ENCODE measurements at regions of chr20 and their contacts with region 1.

Region 1: DNA sequence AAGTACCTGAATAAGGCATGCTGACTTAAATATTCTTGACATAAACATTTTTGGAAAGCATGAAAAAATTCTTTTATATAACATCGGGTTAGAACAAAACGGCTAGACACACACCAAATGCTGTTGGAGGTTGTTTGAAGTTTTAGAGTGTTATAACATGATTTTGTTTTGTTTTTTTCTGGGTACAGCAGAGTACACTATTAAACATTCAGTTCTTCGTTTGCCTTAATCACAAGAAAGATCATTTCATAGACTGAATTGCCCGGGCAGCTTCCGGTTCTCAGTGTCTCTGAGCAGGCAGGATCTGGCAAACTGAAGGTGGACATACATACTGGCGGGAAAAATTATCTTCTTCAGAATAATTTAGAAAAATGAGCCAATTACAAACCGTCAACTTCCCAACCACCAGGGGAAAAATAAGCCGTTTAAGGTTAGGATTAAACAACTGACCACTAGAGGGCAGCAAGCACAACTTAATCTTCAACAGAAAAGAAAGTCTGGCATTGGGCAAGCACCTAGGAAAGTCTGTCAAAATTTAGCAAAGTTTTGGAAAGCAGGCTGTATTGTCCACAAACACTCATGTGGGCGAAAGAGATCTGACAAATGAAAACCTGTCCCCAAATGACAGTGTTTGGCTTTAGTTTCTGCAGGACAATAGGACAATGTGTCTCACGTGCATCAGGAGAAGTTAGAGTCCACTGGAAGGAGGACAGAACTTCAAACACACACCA is 15.0 kb downstream of the ZNF217 start:
- DNase-seq: no peak
- ATAC-seq: peak; percentile 81
- H3K4me3 ChIP-seq: no peak overlapping the region
- H3K27ac ChIP-seq: no peak overlapping the region
- H3K4me1 ChIP-seq: no peaks in the 10 kb centered on the region
- H3K27me3 ChIP-seq: no peaks in the 10 kb centered on the region

Region 2: DNA sequence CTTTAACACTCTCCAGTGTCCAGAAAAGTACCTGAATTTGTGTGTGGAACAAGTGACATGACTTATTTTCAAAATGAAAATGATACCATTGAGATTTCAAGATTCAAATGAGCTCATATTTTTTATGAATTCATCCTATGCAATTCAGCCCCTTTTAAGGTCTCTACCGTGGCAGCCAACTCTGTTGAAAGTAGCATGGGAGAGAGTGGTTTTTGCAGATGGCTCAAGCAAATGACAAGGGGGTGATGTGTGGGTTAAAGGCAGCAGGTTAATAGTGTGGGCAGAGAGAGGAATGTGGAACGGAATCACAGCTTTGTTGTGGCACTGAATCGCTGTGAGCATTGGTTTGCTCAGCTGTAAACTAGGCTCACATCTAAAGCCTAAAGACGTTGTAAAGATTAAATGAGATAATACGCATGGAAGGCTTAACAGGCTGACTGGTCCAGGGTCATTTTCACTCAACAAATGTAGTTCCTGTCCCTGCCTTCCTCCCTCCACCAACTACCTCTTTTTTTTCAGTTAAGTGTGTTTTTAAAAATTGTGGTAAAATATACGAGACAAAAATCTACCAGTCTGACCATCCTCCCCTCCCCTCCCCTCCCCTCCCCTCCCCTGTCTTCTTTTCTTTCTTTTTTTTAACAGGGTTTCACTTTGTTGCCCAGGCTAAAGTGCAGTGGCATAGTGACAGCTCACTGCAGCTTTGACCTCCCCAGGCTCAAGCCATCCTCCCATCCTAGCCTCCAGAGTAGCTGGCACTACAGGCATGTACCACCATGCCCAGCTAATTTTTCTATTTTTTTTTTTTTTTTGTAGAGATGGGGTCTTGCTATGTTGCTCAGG is 129.7 kb after region 1 on chr20:
- intact Hi-C with region 1: no loop called
- DNase-seq: no peak
- ATAC-seq: no peak
- H3K4me3 ChIP-seq: no peak overlapping the region
- H3K27ac ChIP-seq: no peak overlapping the region
- H3K4me1 ChIP-seq: no peaks in the 10 kb centered on the region
- H3K27me3 ChIP-seq: no peaks in the 10 kb centered on the region

Region 3: GRCh38 chr20:53773792-53774401 is 195.2 kb after region 1 on chr20:
- intact Hi-C with region 1: loop called in 1 of 2 experiments (anchors 10 kb)
- DNase-seq: no peak
- ATAC-seq: peak; percentile 80
- H3K4me3 ChIP-seq: no peak overlapping the region
- H3K27ac ChIP-seq: peak overlapping the region in 1 of 2 donors; percentile 90
- H3K4me1 ChIP-seq: peaks cover 0 to 2% of the 10 kb centered on the region in 2 donors
- H3K27me3 ChIP-seq: no peaks in the 10 kb centered on the region

Region 4: DNA sequence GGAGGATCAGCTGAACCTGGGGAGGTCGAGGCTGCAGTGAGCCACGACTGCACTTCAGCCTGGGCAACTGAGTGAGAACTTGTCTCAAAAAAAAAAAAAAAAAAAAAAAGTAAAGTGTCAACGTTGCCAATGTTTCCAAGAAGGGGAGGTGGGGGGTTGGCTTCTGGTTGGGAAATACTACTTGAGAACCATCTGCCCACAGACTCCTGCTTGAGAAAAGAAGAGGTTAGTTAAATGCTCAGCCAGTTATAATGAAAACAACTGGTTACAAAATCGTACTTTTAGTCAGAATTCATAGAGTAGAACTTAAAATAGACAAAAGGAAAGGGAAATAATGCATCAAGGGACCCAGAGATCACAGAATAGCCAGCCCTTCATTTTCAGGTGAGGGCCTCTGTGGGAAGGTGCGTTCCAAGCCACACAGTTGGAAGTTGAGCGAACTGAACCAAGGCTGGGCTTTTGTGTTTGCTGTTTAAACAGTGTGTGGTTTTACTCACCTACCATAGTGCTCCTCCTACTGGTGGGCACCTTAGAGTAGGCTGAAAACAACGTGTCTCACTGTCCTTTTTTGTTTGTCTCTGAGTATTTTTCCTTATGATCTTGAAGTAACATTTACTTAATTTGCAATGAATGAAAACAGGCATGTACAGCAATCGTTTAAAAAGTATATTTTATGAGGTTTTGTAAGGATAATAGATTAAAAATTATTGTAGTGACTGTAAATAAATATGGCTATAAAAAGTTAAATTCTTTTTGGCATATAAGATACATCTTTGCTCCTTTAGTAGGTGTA is 291.0 kb after region 1 on chr20:
- intact Hi-C with region 1: loop called (anchors 2 to 5 kb)
- DNase-seq: peak in 1 of 2 donors; percentile 58
- ATAC-seq: peak; percentile 88
- H3K4me3 ChIP-seq: no peak overlapping the region
- H3K27ac ChIP-seq: no peak overlapping the region
- H3K4me1 ChIP-seq: no peaks in the 10 kb centered on the region
- H3K27me3 ChIP-seq: no peaks in the 10 kb centered on the region

Region 5: DNA sequence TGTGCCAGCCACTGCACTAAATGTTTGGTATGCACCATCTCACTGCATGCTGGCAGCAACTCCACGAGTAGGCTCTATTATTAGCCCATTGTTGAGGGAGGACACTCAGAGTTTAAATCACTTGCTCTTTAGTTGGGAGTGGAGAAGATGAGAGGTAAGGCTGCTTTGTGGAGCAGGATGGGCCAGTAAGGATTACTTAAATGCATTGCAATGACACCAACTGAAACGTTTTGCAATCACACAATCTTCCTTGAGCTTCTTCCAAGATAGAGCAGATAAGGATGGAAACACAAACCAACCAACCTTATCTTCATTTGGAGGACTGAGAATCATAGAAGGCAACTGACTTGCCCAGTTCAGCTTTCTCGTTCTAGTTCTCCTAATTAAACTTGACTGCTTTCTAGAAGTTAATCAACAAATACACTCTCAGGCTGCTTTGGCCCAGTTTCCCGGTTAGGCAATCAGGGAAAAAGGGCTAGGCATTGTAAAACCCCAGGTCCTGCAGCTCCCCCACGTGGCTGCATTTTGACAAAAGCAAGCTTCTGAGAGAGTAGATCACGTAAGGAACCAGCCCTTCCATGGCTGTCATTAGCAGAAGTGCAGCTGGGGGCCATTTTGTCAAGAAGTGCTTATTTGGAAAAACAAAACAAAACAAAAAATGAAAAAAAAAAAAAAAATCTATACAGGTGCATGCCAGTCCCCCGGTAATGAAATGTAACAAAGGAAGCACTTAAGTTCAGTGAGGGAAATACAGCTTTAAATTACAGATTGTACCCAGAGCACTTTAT is 361.1 kb after region 1 on chr20:
- intact Hi-C with region 1: loop called (anchors 5 kb)
- DNase-seq: peak; percentile 92 to 96
- ATAC-seq: peak; percentile 88
- H3K4me3 ChIP-seq: no peak overlapping the region
- H3K27ac ChIP-seq: peak overlapping the region in 1 of 2 donors; percentile 45
- H3K4me1 ChIP-seq: peaks cover 0 to 4% of the 10 kb centered on the region in 2 donors
- H3K27me3 ChIP-seq: no peaks in the 10 kb centered on the region

Region 6: GRCh38 chr20:54199721-54200176 is 621.1 kb after region 1 on chr20:
- intact Hi-C with region 1: loop called (anchors 10 kb)
- DNase-seq: peak; percentile 77 to 87
- ATAC-seq: peak; percentile 82
- H3K4me3 ChIP-seq: no peak overlapping the region
- H3K27ac ChIP-seq: no peak overlapping the region
- H3K4me1 ChIP-seq: no peaks in the 10 kb centered on the region
- H3K27me3 ChIP-seq: no peaks in the 10 kb centered on the region

Measured in aorta (tissue), 5 donors.